H1 (cell line): ENCODE measurements at regions of chr1 and their contacts with region 1.

Region 1: DNA sequence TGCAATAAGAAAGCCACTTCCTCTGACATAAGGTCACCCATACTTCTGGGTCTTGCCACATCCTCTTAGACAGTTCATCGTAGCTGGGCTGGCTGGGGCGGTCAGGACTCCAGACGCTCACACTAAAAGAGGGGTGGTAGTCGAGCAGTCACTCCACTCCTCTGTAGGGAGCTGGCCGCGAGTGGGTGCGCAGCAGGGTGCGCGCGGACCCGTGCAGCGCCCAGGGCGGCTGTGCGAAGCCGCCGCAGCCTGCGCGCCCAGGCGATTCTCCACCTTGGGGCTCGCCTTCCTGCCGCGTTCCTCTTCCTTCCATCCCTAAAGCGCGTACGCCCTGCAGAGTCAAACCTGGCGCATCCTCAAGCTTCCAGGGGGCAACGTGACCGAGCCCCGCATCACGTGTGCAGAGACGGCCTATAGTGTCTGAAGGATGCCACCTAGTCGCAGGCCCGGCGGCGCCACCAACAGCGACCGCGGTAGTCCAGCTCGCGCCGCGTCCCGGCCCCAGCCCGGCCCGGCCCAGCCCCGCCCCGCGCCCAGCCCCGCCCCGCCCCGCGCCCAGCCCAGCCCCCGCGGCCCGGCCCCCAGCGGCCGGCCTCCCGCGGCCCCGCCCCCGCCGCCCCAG is 360 bp upstream of the PRDX6 start:
- DNase-seq: peak; percentile 86 to 88
- H3K4me3 ChIP-seq: peak overlapping the region; percentile 74 to 94 (median 87)
- H3K27ac ChIP-seq: 0 out of 2 replicates have a peak overlapping the region, but pooled peaks have one; percentile 52
- H3K4me1 ChIP-seq: peaks cover 2 to 18% (median 4%) of the 10 kb centered on the region in 4 experiments; a peak in 6 of 7 replicates
- H3K27me3 ChIP-seq: no peaks in the 10 kb centered on the region
- CTCF ChIP-seq: no peak
- EP300 ChIP-seq: no peak
- POLR2A ChIP-seq: peak in 1 of 2 experiments; percentile 80; a peak in 2 of 3 replicates
- RAD21 ChIP-seq: peak in 1 of 2 experiments; percentile 17; a peak in 1 of 4 replicates

Region 2: DNA sequence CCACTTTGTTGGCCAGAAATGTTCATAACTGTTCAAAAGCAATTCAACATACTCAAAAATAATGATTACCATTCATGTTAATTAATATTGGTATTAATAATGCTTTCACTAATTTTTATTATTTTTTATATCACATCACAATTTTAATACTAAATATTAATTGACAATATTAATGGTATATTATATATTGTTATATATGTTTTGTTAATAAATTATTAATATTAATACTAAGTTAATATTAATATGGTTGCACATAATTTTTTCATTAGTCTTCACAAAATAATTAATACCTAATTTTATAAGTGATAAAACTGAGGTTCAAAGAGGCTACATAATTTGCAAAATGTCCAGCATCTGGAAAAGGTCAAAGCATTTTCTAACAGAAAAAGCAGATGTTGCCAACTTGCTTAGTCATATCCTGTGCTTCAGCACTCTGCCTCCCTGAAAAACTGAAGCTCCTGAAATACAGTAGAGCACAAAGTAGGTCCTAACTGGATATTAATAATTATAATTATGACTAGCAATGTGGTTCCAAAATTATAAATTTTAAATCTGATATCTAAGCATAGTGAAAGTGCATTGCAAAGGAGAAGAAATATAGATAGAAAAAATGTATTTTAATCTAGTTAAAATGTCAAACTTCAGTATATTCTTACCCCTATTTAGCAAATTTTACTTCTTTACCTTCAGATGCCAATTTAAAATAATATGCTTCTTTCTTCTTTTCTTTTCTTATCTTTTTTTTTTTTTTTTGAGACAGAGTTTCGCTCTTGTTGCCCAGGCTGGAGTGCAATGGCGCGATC is 146.4 kb before region 1 on chr1:
- CTCF ChIA-PET with region 1: no interaction called
- POLR2A ChIA-PET with region 1: no interaction called
- DNase-seq: no peak
- H3K4me3 ChIP-seq: no peak overlapping the region
- H3K27ac ChIP-seq: no peak overlapping the region
- H3K4me1 ChIP-seq: no peaks in the 10 kb centered on the region
- H3K27me3 ChIP-seq: no peaks in the 10 kb centered on the region
- CTCF ChIP-seq: no peak
- EP300 ChIP-seq: no peak
- POLR2A ChIP-seq: no peak
- RAD21 ChIP-seq: no peak

Region 3: DNA sequence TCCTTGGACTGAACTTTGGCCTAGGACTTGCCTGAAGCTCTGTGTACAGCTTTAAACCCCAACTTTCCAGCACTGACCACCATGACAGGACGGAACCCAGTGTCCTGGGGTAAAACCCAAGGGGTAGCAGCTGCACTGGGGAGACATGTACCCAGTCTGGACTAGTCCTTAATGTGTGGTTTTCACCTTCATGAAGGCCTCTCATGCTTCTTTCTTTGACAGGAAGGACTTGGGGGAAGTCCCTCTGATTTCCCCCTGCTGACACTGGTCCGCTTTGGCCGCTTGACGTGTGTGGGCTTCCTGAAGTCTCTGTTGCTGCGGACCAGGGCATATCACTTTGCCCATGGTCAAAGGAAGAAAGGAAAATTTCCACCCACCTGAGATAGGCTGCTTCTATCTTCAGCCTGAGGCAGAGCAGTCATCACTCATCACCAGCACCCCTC is 66.0 kb before region 1 on chr1:
- CTCF ChIA-PET with region 1: no interaction called
- POLR2A ChIA-PET with region 1: no interaction called
- DNase-seq: no peak
- H3K4me3 ChIP-seq: no peak overlapping the region
- H3K27ac ChIP-seq: no peak overlapping the region
- H3K4me1 ChIP-seq: no peaks in the 10 kb centered on the region; a peak in 3 of 7 replicates
- H3K27me3 ChIP-seq: no peaks in the 10 kb centered on the region
- CTCF ChIP-seq: no peak
- EP300 ChIP-seq: no peak
- POLR2A ChIP-seq: no peak
- RAD21 ChIP-seq: no peak

Region 4: GRCh38 chr1:173438675-173439074 is 38.1 kb before region 1 on chr1:
- CTCF ChIA-PET with region 1: interaction called, 3 read pairs
- POLR2A ChIA-PET with region 1: interaction called, 16 read pairs
- DNase-seq: no peak
- H3K4me3 ChIP-seq: no peak overlapping the region
- H3K27ac ChIP-seq: no peak overlapping the region
- H3K4me1 ChIP-seq: peaks cover 0 to 2% (median under 1%) of the 10 kb centered on the region in 4 experiments; a peak in 2 of 7 replicates
- H3K27me3 ChIP-seq: no peaks in the 10 kb centered on the region
- CTCF ChIP-seq: no peak
- EP300 ChIP-seq: no peak
- POLR2A ChIP-seq: no peak
- RAD21 ChIP-seq: no peak

Region 5: GRCh38 chr1:173489149-173489934 is 12.6 kb after region 1 on chr1:
- CTCF ChIA-PET with region 1: interaction called, 8 read pairs
- POLR2A ChIA-PET with region 1: interaction called, 53 read pairs
- DNase-seq: no peak
- H3K4me3 ChIP-seq: no peak overlapping the region
- H3K27ac ChIP-seq: no peak overlapping the region
- H3K4me1 ChIP-seq: peaks cover 0 to 3% (median 1%) of the 10 kb centered on the region in 4 experiments; a peak in 2 of 7 replicates
- H3K27me3 ChIP-seq: no peaks in the 10 kb centered on the region
- CTCF ChIP-seq: peak in 1 of 3 experiments; percentile 45; a peak in 2 of 4 replicates
- EP300 ChIP-seq: no peak
- POLR2A ChIP-seq: peak in 1 of 2 experiments; percentile 89; a peak in 2 of 3 replicates
- RAD21 ChIP-seq: peak; percentile 55 to 57

Region 6: DNA sequence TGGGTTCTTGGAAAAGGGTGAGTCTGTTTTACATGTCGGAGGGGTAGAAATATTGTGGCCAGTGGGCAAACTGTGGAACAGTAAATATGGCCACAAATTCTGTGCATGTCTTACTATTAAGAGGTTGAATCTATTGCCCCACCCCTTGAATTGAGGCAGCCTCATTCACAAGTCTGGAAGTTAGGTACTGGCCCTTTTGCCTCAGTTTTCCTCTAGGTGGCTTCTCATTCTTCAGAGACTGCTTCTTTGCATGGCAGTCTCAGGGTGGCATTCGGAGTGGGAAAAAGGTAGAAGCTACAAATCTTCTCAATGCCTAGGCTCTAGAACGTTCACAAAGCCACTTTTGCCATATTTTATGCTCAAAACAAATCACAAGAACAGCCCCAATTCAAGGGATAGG is 68.9 kb after region 1 on chr1:
- CTCF ChIA-PET with region 1: no interaction called
- POLR2A ChIA-PET with region 1: no interaction called
- DNase-seq: no peak
- H3K4me3 ChIP-seq: no peak overlapping the region
- H3K27ac ChIP-seq: no peak overlapping the region
- H3K4me1 ChIP-seq: no peaks in the 10 kb centered on the region
- H3K27me3 ChIP-seq: no peaks in the 10 kb centered on the region
- CTCF ChIP-seq: no peak
- EP300 ChIP-seq: no peak
- POLR2A ChIP-seq: no peak
- RAD21 ChIP-seq: peak in 1 of 2 experiments; percentile 25; a peak in 2 of 4 replicates

Region 7: GRCh38 chr1:173824331-173825081 is 347.7 kb after region 1 on chr1 and contains the starts of genes CENPL and DARS2:
- CTCF ChIA-PET with region 1: no interaction called
- POLR2A ChIA-PET with region 1: interaction called, 18 read pairs
- DNase-seq: peak; percentile 88 to 89
- H3K4me3 ChIP-seq: peak within 1 kb of the TSS; percentile 69 to 96 (median 88)
- H3K27ac ChIP-seq: peak within 1 kb of the TSS; percentile 94
- H3K4me1 ChIP-seq: no peaks in the 10 kb centered on the region; a peak in 3 of 7 replicates
- H3K27me3 ChIP-seq: no peaks in the 10 kb centered on the region
- CTCF ChIP-seq: no peak
- EP300 ChIP-seq: no peak
- POLR2A ChIP-seq: peak; percentile 63 to 85
- RAD21 ChIP-seq: no peak
- total RNA-seq, gene CENPL: 16.0 and 16.3 TPM in 2 replicates
- total RNA-seq, gene DARS2: 35.2 and 35.7 TPM in 2 replicates